ENCODE measurements at regions of chr21 and their contacts with region 1.

Region 1: DNA sequence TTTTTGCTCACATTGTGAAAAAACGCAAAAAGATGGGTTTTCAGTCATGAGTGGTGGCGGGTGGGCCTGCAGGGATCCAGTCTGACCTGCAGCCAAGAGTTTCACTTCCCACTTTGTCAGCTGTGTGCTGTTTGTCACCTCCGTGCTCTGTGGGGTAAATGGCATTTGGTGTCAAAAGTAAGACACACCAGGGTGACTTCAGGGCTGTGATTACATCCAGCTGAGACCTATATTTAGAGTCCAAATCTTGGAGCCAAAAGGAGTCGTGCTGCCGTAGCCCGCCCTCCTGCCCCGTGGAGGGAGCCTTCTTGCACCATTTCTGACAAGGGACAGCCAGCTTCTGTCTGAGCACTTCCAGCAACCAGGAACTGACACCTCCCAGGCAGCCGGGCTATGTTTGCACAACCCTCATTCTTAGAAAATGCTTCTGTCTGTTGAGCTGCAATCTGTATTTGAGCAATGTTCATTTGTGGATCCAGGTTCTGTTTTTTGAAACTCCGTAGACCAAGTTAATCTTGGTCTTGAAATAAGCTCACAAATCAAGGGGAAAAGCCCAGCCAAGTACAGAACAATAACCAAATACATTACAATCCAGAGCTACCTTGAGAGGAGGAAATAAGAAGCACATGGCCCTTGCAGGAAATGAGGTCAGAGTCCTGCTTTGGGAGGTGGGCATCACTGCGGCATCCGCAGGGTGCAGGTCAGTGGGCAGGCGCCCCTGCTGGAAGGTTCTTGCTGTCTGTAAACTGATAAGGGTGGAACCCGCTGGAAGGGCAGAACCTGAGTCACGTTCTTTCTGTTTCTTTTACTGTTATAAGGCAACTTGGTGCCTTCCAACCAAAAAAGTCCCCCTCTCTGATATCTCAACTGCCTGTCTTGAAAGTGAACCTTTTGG is 14.4 kb downstream of the ABCG1 start:
- DNase-seq: peak; percentile 82
- ATAC-seq: peak; percentile 71
- H3K4me3 ChIP-seq: no peak overlapping the region; the same call in 1 of the 2 replicates
- H3K27ac ChIP-seq: peak overlapping the region; percentile 84
- H3K4me1 ChIP-seq: peaks cover 69% of the 10 kb centered on the region
- H3K27me3 ChIP-seq: no peaks in the 10 kb centered on the region
- CTCF ChIP-seq: peak; percentile 37 to 47 (median 43); a peak in 4 of 6 replicates
- EP300 ChIP-seq: peak; percentile 91 to 98
- POLR2A ChIP-seq: no peak
- RAD21 ChIP-seq: 0 out of 2 replicates have a peak, but pooled peaks have one; percentile 7

Region 2: DNA sequence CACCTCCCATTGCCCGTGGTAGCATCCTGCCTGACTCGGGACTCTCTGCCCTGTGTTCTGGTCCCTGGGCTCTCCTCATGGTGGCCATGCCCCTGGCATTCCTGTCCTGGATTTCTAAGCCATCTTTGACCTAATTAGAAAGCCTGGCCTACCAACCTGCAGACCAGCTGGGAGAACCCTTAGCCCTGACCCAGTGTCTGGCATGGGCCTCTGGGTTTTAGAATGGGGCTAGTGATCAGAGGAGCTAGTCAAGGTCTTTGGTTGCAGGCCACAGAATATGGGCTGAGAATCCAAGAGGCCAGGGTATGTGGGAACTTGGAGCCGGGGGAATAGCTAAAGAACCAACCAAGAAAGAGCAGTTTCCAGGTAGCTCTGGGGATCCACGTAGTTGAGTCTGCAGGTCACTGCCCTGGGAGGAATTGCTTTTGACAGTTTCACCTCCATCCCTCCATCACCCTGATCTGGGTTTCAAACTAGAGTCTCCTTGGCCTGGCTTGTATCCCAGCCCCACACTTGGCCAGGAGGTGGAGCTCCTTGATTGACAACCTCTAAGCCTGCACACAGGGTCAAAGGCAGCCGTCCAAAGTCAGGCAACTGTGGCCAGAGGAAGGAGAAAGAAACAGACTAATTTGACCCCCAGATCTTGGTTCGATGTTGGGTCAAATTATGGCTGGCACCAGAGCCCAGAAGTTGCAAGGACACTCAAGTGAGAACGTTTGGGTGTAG is 69.1 kb before region 1 on chr21:
- CTCF ChIA-PET with region 1: interaction called, 16 read pairs
- POLR2A ChIA-PET with region 1: interaction called, 4 read pairs
- RAD21 ChIA-PET with region 1: interaction called, 6 read pairs
- SMC1A ChIA-PET with region 1: interaction called, 21 read pairs
- in situ Hi-C with region 1: no loop called
- intact Hi-C with region 1: no loop called
- DNase-seq: no peak
- ATAC-seq: peak; percentile 99
- H3K4me3 ChIP-seq: no peak overlapping the region
- H3K27ac ChIP-seq: no peak overlapping the region
- H3K4me1 ChIP-seq: no peaks in the 10 kb centered on the region
- H3K27me3 ChIP-seq: peaks cover 2 to 3% of the 10 kb centered on the region in 2 experiments; a peak in 3 of 4 replicates
- CTCF ChIP-seq: peak; percentile 73 to 90 (median 78)
- EP300 ChIP-seq: no peak
- POLR2A ChIP-seq: no peak
- RAD21 ChIP-seq: peak; percentile 99

Region 3: DNA sequence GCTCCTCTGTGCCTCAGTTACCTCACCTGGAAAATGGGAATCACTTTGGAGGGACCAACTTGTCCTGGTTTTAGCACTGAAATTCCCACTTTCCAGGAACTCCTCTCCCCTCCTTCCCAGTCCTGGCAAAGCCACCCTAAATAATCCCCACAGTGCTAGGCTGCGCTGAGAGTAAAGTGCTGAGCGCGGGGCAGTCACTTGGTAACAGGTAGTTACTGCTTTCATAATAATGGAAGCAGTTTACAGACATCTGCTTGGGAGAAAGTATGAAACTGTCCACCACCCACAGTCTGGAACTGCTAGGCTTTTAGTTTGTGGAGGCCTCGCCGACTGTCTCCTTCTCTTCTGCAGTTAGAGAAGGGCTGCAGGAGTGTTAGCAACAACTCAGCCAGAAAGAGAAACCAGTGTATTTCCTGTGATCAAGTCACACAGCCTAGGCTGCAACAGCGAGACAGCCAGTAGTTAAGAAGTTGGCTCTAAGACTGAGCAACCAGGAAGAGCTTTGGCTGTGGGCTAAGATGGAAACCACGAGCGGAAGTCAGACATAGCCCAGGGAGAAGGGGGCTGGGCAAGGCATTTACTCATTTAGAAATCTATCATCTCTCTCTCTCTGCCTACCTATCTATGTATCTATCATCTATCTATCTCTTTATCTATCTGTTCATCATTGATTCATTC is 45.2 kb before region 1 on chr21:
- CTCF ChIA-PET with region 1: interaction called, 5 read pairs
- POLR2A ChIA-PET with region 1: interaction called, 6 read pairs
- RAD21 ChIA-PET with region 1: interaction called, 8 read pairs
- SMC1A ChIA-PET with region 1: interaction called, 23 read pairs
- in situ Hi-C with region 1: no loop called
- intact Hi-C with region 1: loop called (anchors 5 kb)
- DNase-seq: peak; percentile 92
- ATAC-seq: peak; percentile 99
- H3K4me3 ChIP-seq: peak overlapping the region; percentile 29; the same call in 1 of the 2 replicates
- H3K27ac ChIP-seq: peak overlapping the region; percentile 92
- H3K4me1 ChIP-seq: peaks cover 19% of the 10 kb centered on the region
- H3K27me3 ChIP-seq: no peaks in the 10 kb centered on the region
- CTCF ChIP-seq: no peak
- EP300 ChIP-seq: no peak; a peak in 1 of 4 replicates
- POLR2A ChIP-seq: peak; percentile 72
- RAD21 ChIP-seq: no peak

Region 4: DNA sequence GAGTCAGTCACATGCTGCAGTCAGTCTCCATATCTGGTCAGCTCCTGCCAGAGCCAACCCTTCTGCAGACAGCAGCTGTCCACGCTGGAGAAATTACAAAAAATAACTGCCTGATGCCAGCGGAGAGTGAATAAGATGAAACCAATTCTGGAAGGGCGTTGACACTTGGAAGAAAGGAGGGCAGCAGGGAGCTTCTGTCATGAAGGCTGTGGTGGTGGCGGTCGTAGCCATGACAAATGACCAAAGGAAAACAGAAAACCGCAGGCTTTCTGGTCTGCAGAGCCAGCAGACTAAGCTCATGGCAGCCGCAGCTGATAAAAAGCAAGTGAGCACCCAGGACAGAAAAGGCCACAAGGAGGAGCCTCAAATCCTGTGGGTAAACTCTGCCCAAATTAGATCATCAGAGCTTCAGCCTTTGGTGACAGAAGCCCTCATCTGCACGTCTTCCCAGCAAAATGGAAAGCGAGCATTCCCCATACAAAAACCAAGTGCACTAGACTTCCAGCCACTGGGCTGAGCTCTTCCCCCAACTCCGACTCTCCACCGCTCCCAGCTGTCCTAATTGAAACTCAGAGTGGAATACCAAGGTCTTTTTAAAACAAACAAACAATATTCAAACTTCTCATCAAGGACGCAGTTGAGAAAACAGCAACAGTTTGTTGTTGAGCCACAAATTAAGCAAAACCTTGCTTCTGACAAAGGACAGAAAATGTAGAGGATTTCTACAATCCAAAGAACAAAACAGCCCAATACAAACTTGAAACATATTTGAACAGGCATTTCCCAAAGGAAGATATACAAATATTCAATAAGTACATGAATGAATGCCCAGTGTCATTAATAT is 234.0 kb after region 1 on chr21:
- CTCF ChIA-PET with region 1: no interaction called
- POLR2A ChIA-PET with region 1: no interaction called
- RAD21 ChIA-PET with region 1: interaction called, 5 read pairs
- SMC1A ChIA-PET with region 1: interaction called, 3 read pairs
- in situ Hi-C with region 1: no loop called
- intact Hi-C with region 1: loop called (anchors 10 kb)
- DNase-seq: no peak
- ATAC-seq: peak; percentile 42
- H3K4me3 ChIP-seq: no peak overlapping the region
- H3K27ac ChIP-seq: no peak overlapping the region
- H3K4me1 ChIP-seq: peaks cover 60% of the 10 kb centered on the region
- H3K27me3 ChIP-seq: no peaks in the 10 kb centered on the region
- CTCF ChIP-seq: peak; percentile 46 to 56 (median 49); a peak in 5 of 6 replicates
- EP300 ChIP-seq: peak; percentile 34 to 54; a peak in 1 of 4 replicates
- POLR2A ChIP-seq: no peak
- RAD21 ChIP-seq: peak; percentile 56